ENCODE measurements at regions of chr2 and their contacts with region 1.

Region 1: GRCh38 chr2:173402405-173402974 is 47.8 kb downstream of the CDCA7 start:
- DNase-seq: peak; percentile 81
- H3K4me3 ChIP-seq: no peak overlapping the region
- H3K27ac ChIP-seq: no peak overlapping the region
- H3K4me1 ChIP-seq: peaks cover 0 to 15% (median 2%) of the 10 kb centered on the region in 4 donors
- H3K27me3 ChIP-seq: peaks cover 63% of the 10 kb centered on the region
- CTCF ChIP-seq: peak; percentile 78 to 87 (median 84)
- EP300 ChIP-seq: no peak
- POLR2A ChIP-seq: no peak

Region 2: DNA sequence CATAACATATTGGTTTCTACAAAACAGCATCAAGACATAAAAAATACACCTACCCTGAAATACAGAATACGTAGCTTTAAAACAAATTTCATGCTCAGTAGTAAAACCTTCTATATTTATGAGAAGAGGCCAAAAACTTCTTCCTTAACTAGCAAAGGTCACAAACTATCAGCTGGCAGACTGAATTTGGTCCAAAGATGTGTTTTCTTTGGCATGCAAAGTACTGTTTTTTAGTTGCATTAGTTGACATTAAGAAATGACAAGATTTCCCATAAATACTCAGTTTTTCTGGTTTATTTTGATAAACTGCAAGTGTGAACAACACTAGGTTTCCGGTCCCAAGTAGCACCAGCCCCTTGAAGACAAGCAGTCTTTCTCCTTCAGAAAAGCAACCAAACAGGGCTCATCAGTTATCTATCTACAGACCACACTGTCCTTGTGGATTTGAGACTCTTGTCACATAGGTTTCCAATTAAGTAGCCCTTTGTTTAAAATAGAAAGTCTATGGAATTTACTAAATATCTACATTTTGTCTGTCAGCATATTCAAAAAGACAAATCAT is 1544.0 kb before region 1 on chr2:
- in situ Hi-C with region 1: no loop called
- intact Hi-C with region 1: no loop called
- DNase-seq: no peak
- H3K4me3 ChIP-seq: no peak overlapping the region
- H3K27ac ChIP-seq: no peak overlapping the region
- H3K4me1 ChIP-seq: no peaks in the 10 kb centered on the region
- H3K27me3 ChIP-seq: no peaks in the 10 kb centered on the region
- CTCF ChIP-seq: no peak
- EP300 ChIP-seq: no peak
- POLR2A ChIP-seq: no peak

Region 3: DNA sequence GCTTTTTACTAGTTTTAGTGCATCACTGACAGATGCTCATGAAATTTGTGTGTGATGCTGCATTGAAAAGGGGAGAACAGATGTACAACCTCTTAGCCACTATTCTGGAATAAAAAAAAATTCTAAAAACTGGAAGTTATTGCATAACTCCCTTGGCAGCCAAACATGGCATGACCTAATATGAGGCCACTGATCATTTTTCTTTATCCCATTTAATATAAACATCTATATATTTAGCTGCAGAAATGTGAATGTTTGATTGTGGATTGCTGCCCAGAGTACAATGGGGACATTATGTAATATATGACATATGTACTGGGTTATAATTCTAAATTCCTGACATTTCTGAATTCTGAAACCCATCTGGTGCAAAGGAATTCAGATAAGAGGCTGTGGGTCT is 38.7 kb after region 1 on chr2:
- in situ Hi-C with region 1: no loop called
- intact Hi-C with region 1: loop called (anchors 5 kb)
- DNase-seq: no peak
- H3K4me3 ChIP-seq: no peak overlapping the region
- H3K27ac ChIP-seq: no peak overlapping the region
- H3K4me1 ChIP-seq: no peaks in the 10 kb centered on the region
- H3K27me3 ChIP-seq: no peaks in the 10 kb centered on the region
- CTCF ChIP-seq: no peak
- EP300 ChIP-seq: no peak
- POLR2A ChIP-seq: no peak

Region 4: GRCh38 chr2:174051741-174052583 is 649.5 kb after region 1 on chr2:
- in situ Hi-C with region 1: loop called in 2 of 4 experiments (anchors 25 kb)
- intact Hi-C with region 1: no loop called
- DNase-seq: peak; percentile 63
- H3K4me3 ChIP-seq: no peak overlapping the region
- H3K27ac ChIP-seq: peak overlapping the region; percentile 14 to 32 (median 22)
- H3K4me1 ChIP-seq: peaks cover 4 to 19% (median 10%) of the 10 kb centered on the region in 4 donors
- H3K27me3 ChIP-seq: no peaks in the 10 kb centered on the region
- CTCF ChIP-seq: no peak
- EP300 ChIP-seq: no peak
- POLR2A ChIP-seq: no peak

Measured in transverse colon (tissue), 4 donors.